ENCODE measurements at regions of chrX and their contacts with region 1.

Region 1: DNA sequence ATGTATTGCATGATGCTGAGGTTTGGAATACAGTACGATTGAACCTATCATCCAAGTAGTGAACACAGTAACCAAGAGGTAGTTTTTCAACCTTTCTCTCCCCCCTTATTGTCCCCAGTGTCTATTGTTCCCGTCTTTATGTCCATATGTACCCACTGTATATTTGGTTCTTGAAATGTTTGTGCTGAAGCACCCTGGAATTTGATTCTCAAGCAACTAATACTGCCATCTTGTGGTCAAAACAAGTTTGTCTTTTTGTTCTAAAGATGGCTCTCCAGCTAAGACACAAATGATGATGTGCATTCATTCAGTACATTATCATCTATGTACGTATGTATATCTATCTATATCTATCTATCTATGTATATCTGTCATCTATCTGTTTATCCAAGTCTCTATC is 33.5 kb upstream of the DCX start:
- DNase-seq: peak; percentile 62
- ATAC-seq: no peak
- H3K4me3 ChIP-seq: no peak overlapping the region
- H3K27ac ChIP-seq: no peak overlapping the region
- H3K4me1 ChIP-seq: no peaks in the 10 kb centered on the region
- H3K27me3 ChIP-seq: no peaks in the 10 kb centered on the region
- CTCF ChIP-seq: peak; percentile 66

Region 2: GRCh38 chrX:111168314-111168713 is 277.2 kb before region 1 on chrX:
- CTCF ChIA-PET with region 1: no interaction called
- POLR2A ChIA-PET with region 1: no interaction called
- intact Hi-C with region 1: loop called (anchors 10 kb)
- DNase-seq: peak; percentile 10
- ATAC-seq: no peak; the same call in 1 of the 2 replicates
- H3K4me3 ChIP-seq: no peak overlapping the region
- H3K27ac ChIP-seq: no peak overlapping the region
- H3K4me1 ChIP-seq: no peaks in the 10 kb centered on the region
- H3K27me3 ChIP-seq: no peaks in the 10 kb centered on the region
- CTCF ChIP-seq: peak; percentile 48

Measured in PC-3 (cell line).